ENCODE measurements at regions of chr18 and their contacts with region 1.

Region 1: GRCh38 chr18:6920099-6920899 is 190.8 kb downstream of the ARHGAP28 start:
- DNase-seq: peak; percentile 75
- H3K4me3 Mint-ChIP-seq: no peak overlapping the region
- H3K27ac Mint-ChIP-seq: no peak overlapping the region
- H3K4me1 Mint-ChIP-seq: peaks cover 6% of the 10 kb centered on the region
- H3K27me3 Mint-ChIP-seq: no peaks in the 10 kb centered on the region
- CTCF ChIP-seq: peak; percentile 83

Region 2: GRCh38 chr18:6941996-6942395 is 21.7 kb after region 1 on chr18:
- CTCF ChIA-PET with region 1: interaction called, 47 read pairs
- POLR2A ChIA-PET with region 1: no interaction called
- intact Hi-C with region 1: no loop called
- DNase-seq: no peak
- H3K4me3 Mint-ChIP-seq: no peak overlapping the region
- H3K27ac Mint-ChIP-seq: no peak overlapping the region
- H3K4me1 Mint-ChIP-seq: no peaks in the 10 kb centered on the region
- H3K27me3 Mint-ChIP-seq: no peaks in the 10 kb centered on the region
- CTCF ChIP-seq: no peak

Region 3: DNA sequence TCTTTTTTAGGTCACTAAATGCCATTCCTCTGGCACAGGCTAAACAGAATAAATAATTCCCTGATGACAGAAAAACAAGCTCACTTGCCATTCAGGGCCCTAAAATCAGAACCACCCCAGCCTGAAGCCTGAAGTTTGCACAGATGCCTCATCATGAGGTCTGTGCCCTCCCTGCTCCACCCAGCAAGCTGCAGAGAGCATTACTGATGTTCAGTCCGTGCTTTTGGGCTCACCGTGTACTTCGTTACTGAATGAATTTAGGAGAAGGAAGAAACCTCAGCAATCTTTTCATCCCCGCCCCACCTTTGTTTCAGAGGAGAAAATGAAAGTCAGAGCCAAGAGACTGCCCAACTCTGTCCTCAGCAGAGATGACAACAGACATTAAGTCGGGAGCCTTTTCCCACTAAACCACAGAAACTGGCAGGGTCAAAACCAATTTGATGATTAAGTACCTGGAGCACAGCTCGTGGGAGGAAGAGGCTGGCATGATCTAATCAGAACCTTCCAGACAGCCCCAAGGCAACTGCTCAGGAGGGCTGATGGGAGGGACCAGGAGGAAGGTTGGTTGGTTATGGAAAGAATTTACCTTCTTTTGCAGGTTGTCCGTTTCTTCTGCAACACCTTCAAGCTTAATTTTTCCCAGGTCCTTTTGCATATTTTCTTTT is 74.6 kb after region 1 on chr18:
- CTCF ChIA-PET with region 1: interaction called, 193 read pairs
- POLR2A ChIA-PET with region 1: interaction called, 7 read pairs
- intact Hi-C with region 1: loop called (anchors 1 kb)
- DNase-seq: peak; percentile 64
- H3K4me3 Mint-ChIP-seq: peak overlapping the region; percentile 59
- H3K27ac Mint-ChIP-seq: peak overlapping the region; percentile 90
- H3K4me1 Mint-ChIP-seq: peaks cover 15% of the 10 kb centered on the region
- H3K27me3 Mint-ChIP-seq: no peaks in the 10 kb centered on the region
- CTCF ChIP-seq: no peak

Region 4: DNA sequence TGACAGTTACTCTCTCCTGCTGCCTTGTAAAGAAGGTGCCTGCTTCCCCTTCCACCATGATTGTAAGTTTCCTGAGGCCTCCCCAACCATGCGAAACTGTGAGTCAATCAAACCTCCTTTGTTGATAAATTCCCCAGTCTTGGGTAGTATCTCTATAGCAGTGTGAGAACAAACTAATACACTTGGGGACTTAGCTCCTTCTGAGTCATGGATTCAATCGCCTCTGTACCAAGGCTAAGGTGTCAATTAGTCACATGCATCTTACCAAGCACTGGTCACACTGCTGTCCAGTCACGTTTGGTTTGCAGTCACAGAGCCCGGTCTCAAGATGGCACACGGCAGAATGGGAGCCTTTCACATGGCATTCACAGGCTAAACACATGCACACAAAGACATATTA is 96.7 kb after region 1 on chr18:
- CTCF ChIA-PET with region 1: interaction called, 208 read pairs
- POLR2A ChIA-PET with region 1: interaction called, 8 read pairs
- intact Hi-C with region 1: loop called (anchors 1 kb)
- DNase-seq: no peak
- H3K4me3 Mint-ChIP-seq: no peak overlapping the region
- H3K27ac Mint-ChIP-seq: no peak overlapping the region
- H3K4me1 Mint-ChIP-seq: no peaks in the 10 kb centered on the region
- H3K27me3 Mint-ChIP-seq: no peaks in the 10 kb centered on the region
- CTCF ChIP-seq: no peak

Region 5: DNA sequence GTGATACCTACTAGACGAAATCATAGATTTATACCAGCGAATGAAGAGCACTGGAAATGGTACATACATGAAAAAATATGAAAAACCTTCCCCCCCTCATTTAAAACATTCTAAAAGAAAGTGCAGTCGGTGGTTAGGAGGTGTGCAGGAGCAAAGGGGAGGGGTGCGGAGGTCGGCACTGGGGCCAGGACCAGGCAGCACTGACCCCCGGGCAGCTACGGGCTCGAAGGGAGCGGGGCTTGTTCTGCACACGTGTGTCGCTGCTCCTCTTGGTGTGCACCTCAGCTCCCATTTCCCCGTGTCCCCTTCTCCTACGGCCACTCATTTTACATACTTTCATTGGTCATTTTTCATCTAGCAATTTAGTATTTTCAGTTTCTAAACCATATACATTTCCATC is 108.3 kb after region 1 on chr18:
- CTCF ChIA-PET with region 1: interaction called, 208 read pairs
- POLR2A ChIA-PET with region 1: no interaction called
- intact Hi-C with region 1: no loop called
- DNase-seq: no peak
- H3K4me3 Mint-ChIP-seq: no peak overlapping the region
- H3K27ac Mint-ChIP-seq: no peak overlapping the region
- H3K4me1 Mint-ChIP-seq: no peaks in the 10 kb centered on the region
- H3K27me3 Mint-ChIP-seq: no peaks in the 10 kb centered on the region
- CTCF ChIP-seq: no peak

Region 6: GRCh38 chr18:7177116-7177744 is 256.9 kb after region 1 on chr18:
- CTCF ChIA-PET with region 1: interaction called, 69 read pairs
- POLR2A ChIA-PET with region 1: no interaction called
- intact Hi-C with region 1: loop called (anchors 1 kb)
- DNase-seq: peak; percentile 78
- H3K4me3 Mint-ChIP-seq: no peak overlapping the region
- H3K27ac Mint-ChIP-seq: no peak overlapping the region
- H3K4me1 Mint-ChIP-seq: no peaks in the 10 kb centered on the region
- H3K27me3 Mint-ChIP-seq: peaks cover 29% of the 10 kb centered on the region
- CTCF ChIP-seq: peak; percentile 84